MCF 10A (cell line): ENCODE measurements at regions of chr12 and their contacts with region 1.

Region 1: GRCh38 chr12:88445705-88446394 is 134.4 kb downstream of the KITLG start:
- DNase-seq: no peak
- H3K4me3 Mint-ChIP-seq: no peak overlapping the region
- H3K27ac Mint-ChIP-seq: no peak overlapping the region
- H3K4me1 Mint-ChIP-seq: peaks cover 5% of the 10 kb centered on the region
- H3K27me3 Mint-ChIP-seq: no peaks in the 10 kb centered on the region
- CTCF ChIP-seq: no peak

Region 2: DNA sequence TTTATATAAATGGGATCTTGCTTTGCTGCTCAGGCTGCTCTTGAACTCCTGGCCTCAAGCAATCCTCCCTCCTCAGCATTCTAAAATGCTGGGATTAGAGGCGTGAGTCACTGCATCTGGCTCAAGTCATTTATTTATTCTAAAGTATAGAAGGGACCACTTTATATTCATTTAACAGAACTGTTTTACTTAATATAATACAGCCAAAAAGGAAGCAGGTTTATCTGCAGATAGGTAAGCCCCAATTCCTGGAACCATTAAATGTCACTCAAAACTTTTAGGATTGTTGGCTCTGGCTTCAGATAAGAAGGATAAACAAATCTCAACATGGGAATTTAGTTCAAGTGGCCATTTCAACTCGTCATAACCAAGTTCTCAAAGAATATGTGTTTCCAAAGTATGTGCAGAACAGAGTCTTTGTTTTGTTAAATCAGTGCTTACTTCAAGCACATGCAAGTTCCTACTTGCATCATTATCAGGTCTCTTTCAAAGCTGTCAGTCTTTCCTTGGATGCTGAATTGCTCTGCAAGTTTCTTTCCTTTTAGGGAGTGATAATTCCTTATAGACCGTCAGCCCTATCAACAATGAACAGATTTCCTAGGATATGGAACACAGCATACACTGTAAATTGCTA is 74.1 kb after region 1 on chr12:
- CTCF ChIA-PET with region 1: no interaction called
- POLR2A ChIA-PET with region 1: no interaction called
- intact Hi-C with region 1: loop called (anchors 2 kb)
- DNase-seq: no peak
- H3K4me3 Mint-ChIP-seq: no peak overlapping the region
- H3K27ac Mint-ChIP-seq: no peak overlapping the region
- H3K4me1 Mint-ChIP-seq: peaks cover 11% of the 10 kb centered on the region
- H3K27me3 Mint-ChIP-seq: no peaks in the 10 kb centered on the region
- CTCF ChIP-seq: no peak

Region 3: GRCh38 chr12:88615490-88615889 is 169.6 kb after region 1 on chr12:
- CTCF ChIA-PET with region 1: no interaction called
- POLR2A ChIA-PET with region 1: no interaction called
- intact Hi-C with region 1: no loop called
- DNase-seq: no peak
- H3K4me3 Mint-ChIP-seq: no peak overlapping the region
- H3K27ac Mint-ChIP-seq: no peak overlapping the region
- H3K4me1 Mint-ChIP-seq: no peaks in the 10 kb centered on the region
- H3K27me3 Mint-ChIP-seq: no peaks in the 10 kb centered on the region
- CTCF ChIP-seq: no peak